Keratinocyte (primary cell): ENCODE measurements at regions of chr9 and their contacts with region 1.

Region 1: GRCh38 chr9:6215562-6215961 is at the start of gene IL33:
- DNase-seq: no peak
- H3K4me3 ChIP-seq: no peak within 1 kb of the TSS
- H3K27ac ChIP-seq: no peak within 1 kb of the TSS
- H3K4me1 ChIP-seq: peaks cover 15% of the 10 kb centered on the region
- H3K27me3 ChIP-seq: no peaks in the 10 kb centered on the region
- CTCF ChIP-seq: no peak
- polyA plus RNA-seq, gene IL33: 1.6 to 33.2 TPM (median 7.8 TPM) in 3 replicates

Region 2: GRCh38 chr9:6305954-6306563 is 90.5 kb after region 1 on chr9:
- dilution Hi-C with region 1: loop called (anchors 25 kb)
- DNase-seq: no peak
- H3K4me3 ChIP-seq: no peak overlapping the region
- H3K27ac ChIP-seq: no peak overlapping the region
- H3K4me1 ChIP-seq: peaks cover 9% of the 10 kb centered on the region
- H3K27me3 ChIP-seq: no peaks in the 10 kb centered on the region
- CTCF ChIP-seq: peak in 1 of 3 experiments; percentile 35